Natural killer cell (primary cell): ENCODE measurements at regions of chr2 and their contacts with region 1.

Region 1: DNA sequence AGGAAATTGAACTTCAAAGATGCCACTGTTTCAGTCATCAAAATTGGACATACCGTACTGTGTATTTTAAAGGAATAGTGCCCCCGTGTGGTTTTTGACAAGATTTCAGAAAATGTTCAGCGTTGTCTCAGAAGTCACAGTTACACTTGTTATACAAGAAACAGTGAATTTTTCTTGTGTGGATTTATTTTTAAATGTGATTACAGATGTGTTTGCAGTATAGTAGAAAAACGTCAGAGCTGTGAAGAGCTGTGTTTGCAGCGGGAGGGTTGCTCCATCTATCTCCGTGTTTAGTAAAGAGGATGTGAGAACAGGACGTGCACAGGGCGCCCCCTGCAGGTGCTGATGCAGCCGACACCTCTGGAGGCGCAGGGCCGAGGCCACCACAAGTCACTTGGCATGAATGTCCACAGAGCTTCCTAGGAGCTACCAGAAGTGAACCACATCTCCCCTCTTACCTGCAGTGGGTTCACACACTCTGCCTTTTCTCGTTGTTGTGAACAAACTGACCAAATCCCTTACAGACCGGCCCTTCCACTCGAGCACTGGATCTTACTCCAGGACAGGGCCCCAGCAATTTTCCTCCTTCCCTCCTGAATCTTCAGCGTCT is 73.1 kb downstream of the CACNB4 start:
- DNase-seq: peak; percentile 75 to 87
- ATAC-seq: peak; percentile 94 to 97 (median 97)
- H3K4me3 ChIP-seq: peak overlapping the region; percentile 21
- H3K4me3 Mint-ChIP-seq: peak overlapping the region; percentile 85
- H3K27ac ChIP-seq: no peak overlapping the region
- H3K27ac Mint-ChIP-seq: peak overlapping the region in 1 of 2 donors; percentile 54
- H3K4me1 ChIP-seq: no peaks in the 10 kb centered on the region
- H3K4me1 Mint-ChIP-seq: peaks cover 11 to 12% of the 10 kb centered on the region in 2 donors
- H3K27me3 ChIP-seq: no peaks in the 10 kb centered on the region
- H3K27me3 Mint-ChIP-seq: peaks cover 0 to 9% of the 10 kb centered on the region in 2 donors
- CTCF ChIP-seq: peak; percentile 100

Region 2: GRCh38 chr2:151999053-151999452 is 26.7 kb before region 1 on chr2:
- intact Hi-C with region 1: loop called (anchors 1 kb)
- DNase-seq: peak; percentile 19 to 69
- ATAC-seq: peak; percentile 66 to 80 (median 78)
- H3K4me3 ChIP-seq: no peak overlapping the region
- H3K4me3 Mint-ChIP-seq: no peak overlapping the region
- H3K27ac ChIP-seq: no peak overlapping the region
- H3K27ac Mint-ChIP-seq: no peak overlapping the region
- H3K4me1 ChIP-seq: no peaks in the 10 kb centered on the region
- H3K4me1 Mint-ChIP-seq: peaks cover under 1 to 1% of the 10 kb centered on the region in 2 donors
- H3K27me3 ChIP-seq: no peaks in the 10 kb centered on the region
- H3K27me3 Mint-ChIP-seq: no peaks in the 10 kb centered on the region
- CTCF ChIP-seq: peak; percentile 86